CD8-positive, alpha-beta T cell (primary cell): ENCODE measurements at regions of chr16 and their contacts with region 1.

Region 1: DNA sequence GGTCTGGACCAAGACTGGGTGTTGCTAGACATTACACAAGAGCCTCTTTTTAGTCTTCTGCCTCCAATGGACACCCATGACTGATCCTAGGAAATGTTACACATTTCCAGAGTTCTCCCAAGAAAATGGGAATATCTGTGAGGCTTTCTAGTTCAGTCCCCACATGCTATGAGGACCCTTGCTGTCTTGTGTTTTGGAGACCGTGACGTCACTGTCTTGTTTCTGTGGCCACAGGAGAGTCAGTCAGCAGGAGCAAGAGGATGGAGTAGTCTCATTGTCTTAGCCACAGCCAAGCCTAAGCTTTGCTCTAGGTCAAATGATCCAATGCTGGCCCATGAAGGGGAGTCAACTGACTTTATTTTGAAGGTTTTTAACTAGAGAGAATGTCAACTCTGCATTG is 820.1 kb upstream of the RBFOX1 start:
- DNase-seq: no peak
- ATAC-seq: no peak
- H3K4me3 ChIP-seq: no peak overlapping the region
- H3K4me3 Mint-ChIP-seq: no peak overlapping the region
- H3K27ac ChIP-seq: no peak overlapping the region
- H3K27ac Mint-ChIP-seq: no peak overlapping the region
- H3K4me1 ChIP-seq: no peaks in the 10 kb centered on the region
- H3K4me1 Mint-ChIP-seq: no peaks in the 10 kb centered on the region
- H3K27me3 ChIP-seq: no peaks in the 10 kb centered on the region
- H3K27me3 Mint-ChIP-seq: no peaks in the 10 kb centered on the region
- CTCF ChIP-seq: no peak

Region 2: DNA sequence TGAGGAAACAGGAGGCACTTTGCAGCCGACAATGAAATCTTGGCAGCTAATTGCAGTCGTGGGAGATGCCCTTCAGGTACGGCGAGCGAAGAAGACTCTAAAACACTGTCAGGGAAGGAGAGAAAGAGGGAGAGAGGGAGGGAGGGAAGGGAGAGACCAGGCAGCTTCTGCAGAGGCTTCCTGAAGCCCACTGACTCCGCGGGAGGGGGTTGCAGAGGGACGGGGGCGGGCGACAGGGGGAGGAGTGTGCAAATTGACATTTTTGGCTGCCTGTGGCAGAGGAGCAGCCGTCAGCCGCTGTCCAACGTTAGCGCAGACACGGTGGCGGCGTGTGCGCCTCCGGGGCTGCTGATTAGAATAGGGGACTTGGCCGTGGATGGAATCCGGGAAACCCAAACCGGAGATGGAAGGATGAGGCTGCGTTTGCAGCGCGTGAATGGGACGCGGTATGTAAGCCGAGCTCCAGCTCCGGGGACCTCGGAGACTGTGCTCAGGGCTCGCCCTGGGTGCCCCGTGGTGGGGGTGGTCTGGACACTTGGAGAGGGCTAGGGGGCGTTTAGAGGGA is 29.0 kb before region 1 on chr16:
- CTCF ChIA-PET with region 1: no interaction called
- POLR2A ChIA-PET with region 1: no interaction called
- intact Hi-C with region 1: loop called in 1 of 2 experiments (anchors 1 kb)
- DNase-seq: no peak
- ATAC-seq: no peak
- H3K4me3 ChIP-seq: no peak overlapping the region
- H3K4me3 Mint-ChIP-seq: no peak overlapping the region
- H3K27ac ChIP-seq: no peak overlapping the region
- H3K27ac Mint-ChIP-seq: no peak overlapping the region
- H3K4me1 ChIP-seq: no peaks in the 10 kb centered on the region
- H3K4me1 Mint-ChIP-seq: no peaks in the 10 kb centered on the region
- H3K27me3 ChIP-seq: no peaks in the 10 kb centered on the region
- H3K27me3 Mint-ChIP-seq: peaks cover 12% of the 10 kb centered on the region
- CTCF ChIP-seq: no peak

Region 3: DNA sequence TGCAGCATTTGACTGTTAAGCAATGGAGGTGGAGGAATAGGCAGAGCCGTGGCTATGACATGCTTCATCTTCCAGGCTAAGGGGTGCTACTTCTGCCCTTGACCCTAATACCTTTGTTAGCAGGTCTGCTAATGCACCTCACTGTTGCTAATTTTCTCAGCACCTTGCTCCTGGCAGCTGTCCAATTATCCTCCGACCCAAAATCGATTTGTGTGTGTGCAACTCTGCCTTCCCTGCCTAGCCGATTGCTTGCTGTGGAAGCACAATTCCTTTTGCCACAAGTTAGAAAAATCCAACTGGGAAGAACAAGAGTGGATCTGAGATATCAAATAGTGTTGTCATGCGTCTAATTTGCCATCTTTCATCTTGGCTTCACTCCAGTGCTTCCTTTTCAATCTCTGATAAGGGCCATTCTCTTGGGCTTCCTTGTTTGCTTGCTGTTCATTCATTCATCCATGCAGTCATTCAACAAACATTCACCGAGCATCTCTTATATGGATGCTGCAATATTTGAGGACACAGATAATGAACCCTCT is 1242.9 kb after region 1 on chr16:
- CTCF ChIA-PET with region 1: no interaction called
- POLR2A ChIA-PET with region 1: no interaction called
- intact Hi-C with region 1: no loop called
- DNase-seq: no peak
- ATAC-seq: no peak
- H3K4me3 ChIP-seq: no peak overlapping the region
- H3K4me3 Mint-ChIP-seq: no peak overlapping the region
- H3K27ac ChIP-seq: no peak overlapping the region
- H3K27ac Mint-ChIP-seq: no peak overlapping the region
- H3K4me1 ChIP-seq: no peaks in the 10 kb centered on the region
- H3K4me1 Mint-ChIP-seq: no peaks in the 10 kb centered on the region
- H3K27me3 ChIP-seq: no peaks in the 10 kb centered on the region
- H3K27me3 Mint-ChIP-seq: no peaks in the 10 kb centered on the region
- CTCF ChIP-seq: no peak